ENCODE measurements at regions of chr16 and their contacts with region 1.

Region 1: GRCh38 chr16:78220571-78220970 is 121.1 kb downstream of the WWOX start:
- DNase-seq: no peak
- H3K4me3 ChIP-seq: no peak overlapping the region
- H3K27ac ChIP-seq: no peak overlapping the region
- H3K27me3 ChIP-seq: no peaks in the 10 kb centered on the region
- CTCF ChIP-seq: no peak

Region 2: DNA sequence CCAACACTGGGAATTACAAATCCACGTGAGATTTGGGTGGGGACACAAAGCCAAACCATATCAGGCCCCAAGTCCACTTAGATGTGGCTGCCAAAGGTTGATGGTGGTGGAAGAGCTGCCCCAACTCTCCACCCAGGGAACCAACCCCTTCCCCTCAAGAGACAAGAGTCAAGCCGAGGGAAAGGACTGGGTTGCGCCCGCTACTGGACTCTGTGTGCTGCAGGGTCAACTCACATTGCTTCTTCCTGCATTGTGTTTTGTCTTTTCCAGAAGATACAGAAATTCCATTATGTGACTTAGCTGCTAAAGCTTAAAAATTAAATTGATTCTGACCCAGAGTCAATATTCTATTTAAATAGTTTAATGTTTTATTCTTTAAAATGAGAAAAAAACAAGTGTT is 844.2 kb before region 1 on chr16:
- CTCF ChIA-PET with region 1: interaction called, 10 read pairs
- POLR2A ChIA-PET with region 1: no interaction called
- DNase-seq: no peak
- H3K4me3 ChIP-seq: no peak overlapping the region
- H3K27ac ChIP-seq: no peak overlapping the region
- H3K27me3 ChIP-seq: no peaks in the 10 kb centered on the region
- CTCF ChIP-seq: no peak

Region 3: DNA sequence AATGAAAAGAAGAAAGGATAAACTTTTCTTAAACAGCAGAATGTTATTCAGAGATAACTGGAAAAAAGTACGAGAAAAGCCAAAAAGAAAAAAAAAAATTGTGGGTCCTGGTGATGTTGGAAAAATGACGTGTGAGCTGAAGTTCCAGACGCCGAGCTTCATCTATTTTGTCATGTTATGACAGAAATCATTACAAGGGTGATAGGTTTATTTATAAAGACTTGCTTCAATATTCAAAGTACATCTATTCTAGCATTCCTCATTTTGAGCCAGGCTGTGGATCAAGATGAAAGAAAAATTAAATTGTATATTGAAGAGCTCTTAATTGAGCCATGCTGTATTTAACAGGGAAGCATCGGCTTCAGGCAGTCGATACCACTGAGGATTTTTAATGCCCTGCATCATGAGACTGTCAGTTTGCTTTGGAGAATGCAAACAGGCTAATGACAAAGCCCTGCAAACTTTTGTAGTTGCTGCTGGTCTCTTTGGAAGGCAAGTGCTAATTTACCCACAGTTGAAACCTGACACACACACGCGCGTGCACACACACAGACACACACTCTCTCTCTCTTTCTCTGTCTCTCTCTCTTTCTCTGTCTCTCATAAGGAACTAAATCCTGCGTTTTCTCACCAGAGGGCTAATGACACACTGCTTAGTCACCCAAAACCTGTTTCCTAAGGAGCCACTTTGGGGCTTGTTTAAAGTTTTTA is 10.5 kb before region 1 on chr16:
- CTCF ChIA-PET with region 1: no interaction called
- POLR2A ChIA-PET with region 1: no interaction called
- DNase-seq: no peak
- H3K4me3 ChIP-seq: no peak overlapping the region
- H3K27ac ChIP-seq: no peak overlapping the region
- H3K27me3 ChIP-seq: no peaks in the 10 kb centered on the region
- CTCF ChIP-seq: no peak

Region 4: GRCh38 chr16:78244131-78244903 is 23.7 kb after region 1 on chr16:
- CTCF ChIA-PET with region 1: no interaction called
- POLR2A ChIA-PET with region 1: no interaction called
- DNase-seq: no peak
- H3K4me3 ChIP-seq: no peak overlapping the region
- H3K27ac ChIP-seq: no peak overlapping the region
- H3K27me3 ChIP-seq: no peaks in the 10 kb centered on the region
- CTCF ChIP-seq: no peak